ENCODE measurements at regions of chr11 and their contacts with region 1.

Region 1: GRCh38 chr11:13440100-13440855 is 22.7 kb downstream of the BTBD10 start:
- DNase-seq: no peak
- ATAC-seq: no peak
- H3K4me3 ChIP-seq: no peak overlapping the region
- H3K4me3 Mint-ChIP-seq: no peak overlapping the region
- H3K27ac ChIP-seq: no peak overlapping the region
- H3K27ac Mint-ChIP-seq: no peak overlapping the region
- H3K4me1 ChIP-seq: no peaks in the 10 kb centered on the region
- H3K4me1 Mint-ChIP-seq: peaks cover 35 to 66% (median 62%) of the 10 kb centered on the region in 3 donors
- H3K27me3 ChIP-seq: no peaks in the 10 kb centered on the region
- H3K27me3 Mint-ChIP-seq: no peaks in the 10 kb centered on the region

Region 2: DNA sequence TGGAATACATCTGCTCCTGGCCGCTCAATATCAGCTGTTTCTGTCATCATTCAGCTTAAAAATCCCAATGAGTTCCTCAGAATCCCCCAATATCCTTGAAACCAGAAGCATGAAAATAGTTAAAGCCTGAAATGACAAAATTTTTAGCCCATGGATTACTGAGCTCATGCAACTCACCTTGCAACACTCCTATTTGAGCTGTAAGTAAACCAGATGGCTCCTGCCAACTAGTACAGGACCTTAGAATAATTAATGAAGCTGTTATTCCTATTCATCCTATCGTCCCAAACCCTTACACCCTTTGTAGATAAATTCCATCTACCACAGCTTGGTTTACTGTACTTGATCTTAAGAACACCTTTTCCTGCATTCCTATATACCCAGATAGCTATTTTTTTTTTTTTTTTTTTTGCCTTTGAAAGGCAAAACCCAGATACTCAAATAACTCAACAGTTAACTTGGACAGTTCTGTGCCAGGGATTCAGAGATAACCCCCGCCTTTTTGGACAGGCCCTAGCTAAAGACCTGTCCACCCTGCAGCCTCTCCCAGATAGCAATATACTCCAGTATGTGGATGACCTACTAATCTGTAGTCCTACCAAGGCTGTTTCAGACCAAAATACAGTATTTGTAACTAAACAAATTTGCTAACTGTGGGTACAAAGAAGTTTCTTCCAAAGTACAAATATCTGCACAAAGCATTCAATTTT is 32.9 kb after region 1 on chr11:
- CTCF ChIA-PET with region 1: interaction called in 1 of 2 experiments, 12 read pairs
- POLR2A ChIA-PET with region 1: no interaction called
- DNase-seq: no peak
- ATAC-seq: no peak
- H3K4me3 ChIP-seq: no peak overlapping the region
- H3K4me3 Mint-ChIP-seq: no peak overlapping the region
- H3K27ac ChIP-seq: no peak overlapping the region
- H3K27ac Mint-ChIP-seq: no peak overlapping the region
- H3K4me1 ChIP-seq: no peaks in the 10 kb centered on the region
- H3K4me1 Mint-ChIP-seq: no peaks in the 10 kb centered on the region
- H3K27me3 ChIP-seq: peaks cover 2 to 5% of the 10 kb centered on the region in 2 experiments
- H3K27me3 Mint-ChIP-seq: peaks cover 15 to 25% of the 10 kb centered on the region in 2 donors